ENCODE measurements at regions of chr19 and their contacts with region 1.

Region 1: GRCh38 chr19:17346109-17346671 is 8.8 kb downstream of the GTPBP3 start:
- DNase-seq: peak; percentile 94

Region 2: DNA sequence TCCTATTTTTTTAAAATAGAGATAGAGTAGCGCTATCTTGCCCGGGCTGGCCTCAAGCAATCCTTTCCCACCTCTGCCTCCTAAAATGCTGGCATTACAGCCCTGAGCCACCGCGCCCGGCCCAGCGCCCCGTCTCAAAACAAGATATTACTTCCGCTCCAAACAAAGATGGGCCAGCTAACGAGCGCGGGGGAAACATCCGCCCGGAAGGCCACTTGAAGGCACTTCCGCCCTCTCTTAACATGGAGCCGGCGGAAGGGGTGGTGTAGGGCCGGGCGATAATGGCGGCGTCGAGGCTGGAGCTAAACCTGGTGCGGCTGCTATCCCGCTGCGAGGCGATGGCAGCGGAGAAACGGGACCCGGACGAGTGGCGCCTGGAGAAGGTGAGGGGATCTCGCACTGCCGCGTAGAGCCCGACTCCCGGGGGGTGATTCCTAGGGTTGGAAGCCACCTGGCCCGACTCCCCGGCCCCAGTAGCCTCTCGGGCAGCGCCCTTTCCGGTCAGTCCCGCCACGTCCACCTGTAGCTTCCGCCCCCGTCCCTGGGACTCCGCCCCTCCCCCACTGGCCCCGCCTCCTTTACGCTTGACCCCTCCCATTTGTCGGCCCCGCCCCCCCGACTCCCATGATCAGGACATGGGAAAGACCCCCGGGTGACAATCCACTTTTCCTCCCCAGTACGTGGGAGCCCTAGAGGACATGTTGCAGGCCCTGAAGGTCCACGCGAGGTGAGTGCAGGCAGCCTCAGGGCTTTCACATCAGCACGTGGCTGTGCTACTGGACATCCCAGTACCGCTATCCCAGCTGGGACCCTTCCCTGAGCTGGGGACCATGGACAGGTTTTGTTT is 130.8 kb before region 1 on chr19 and contains the start of gene USE1:
- intact Hi-C with region 1: no loop called
- DNase-seq: peak; percentile 97
- total RNA-seq, gene USE1: 16.4 to 17.6 TPM

Region 3: GRCh38 chr19:17281391-17282368 is 64.5 kb before region 1 on chr19 and contains the start of gene ANKLE1:
- intact Hi-C with region 1: no loop called
- DNase-seq: peak; percentile 84
- total RNA-seq, gene ANKLE1: 0.14 to 0.19 TPM

Region 4: DNA sequence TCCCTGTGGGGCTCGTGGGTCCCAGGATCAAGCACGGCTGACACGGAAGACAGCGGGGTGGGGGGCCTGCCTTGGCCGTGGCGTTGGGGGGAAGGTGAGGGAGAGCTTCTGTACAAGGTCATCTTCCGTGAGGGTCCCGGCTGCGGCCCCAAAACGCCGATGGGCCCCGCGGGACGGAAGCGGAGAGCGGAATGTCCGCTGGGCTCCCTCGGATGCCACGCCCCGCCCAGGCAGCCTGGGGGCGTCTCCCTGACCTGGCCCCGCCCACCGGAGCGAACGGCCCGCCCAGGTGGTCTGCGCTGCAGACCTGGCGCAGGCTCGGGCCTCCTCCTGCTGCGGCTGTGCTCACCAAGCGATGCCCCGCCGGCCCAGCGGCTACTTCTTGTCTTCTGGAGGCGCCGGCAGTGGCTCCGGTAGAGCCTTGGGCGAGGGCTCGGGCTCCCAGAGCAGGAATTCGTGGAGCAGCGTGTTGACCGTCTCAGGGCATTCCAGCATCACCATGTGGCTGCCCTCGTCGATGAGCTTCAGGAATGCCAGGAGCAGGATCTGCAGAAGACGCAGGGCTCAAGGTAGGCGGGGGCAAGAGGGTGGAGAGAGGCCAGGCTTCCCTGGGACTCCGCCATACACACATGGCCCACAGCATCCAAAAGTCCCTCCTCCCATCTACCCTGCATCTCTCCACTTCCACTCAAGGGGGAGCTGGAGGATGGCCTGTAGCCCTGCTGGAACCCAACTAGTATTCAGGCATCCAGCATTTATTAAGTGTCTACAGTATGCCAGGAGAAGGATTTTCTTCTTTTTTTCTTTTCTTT is 53.7 kb before region 1 on chr19:
- intact Hi-C with region 1: loop called in 1 of 2 experiments (anchors 10 kb)
- DNase-seq: peak; percentile 89

Region 5: DNA sequence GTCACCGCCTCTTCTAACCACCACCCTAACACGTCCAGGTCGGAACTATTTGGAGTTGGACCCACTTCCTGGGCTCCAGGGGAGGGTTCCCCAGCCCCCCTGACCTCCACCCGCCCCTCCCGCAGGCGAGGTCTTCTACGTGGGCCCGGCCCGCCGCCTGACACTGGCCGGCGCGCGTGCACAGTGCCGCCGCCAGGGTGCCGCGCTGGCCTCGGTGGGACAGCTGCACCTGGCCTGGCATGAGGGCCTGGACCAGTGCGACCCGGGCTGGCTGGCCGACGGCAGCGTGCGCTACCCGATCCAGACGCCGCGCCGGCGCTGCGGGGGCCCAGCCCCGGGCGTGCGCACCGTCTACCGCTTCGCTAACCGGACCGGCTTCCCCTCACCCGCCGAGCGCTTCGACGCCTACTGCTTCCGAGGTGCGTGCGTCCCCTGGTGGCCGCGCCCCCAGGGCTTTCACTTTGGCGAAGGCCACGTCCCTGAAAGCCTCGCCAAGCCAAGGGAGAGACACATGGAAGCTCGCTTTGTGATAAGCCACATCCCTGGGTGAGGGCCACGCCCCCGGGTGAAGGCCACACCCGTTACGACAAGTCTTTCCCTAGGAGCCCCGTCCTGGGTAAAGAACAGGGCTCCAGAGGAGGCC is 1878.8 kb after region 1 on chr19:
- intact Hi-C with region 1: loop called in 1 of 2 experiments (anchors 5 kb)
- DNase-seq: peak; percentile 85